ENCODE measurements at regions of chr2 and their contacts with region 1.

Region 1: GRCh38 chr2:54723131-54723995 is at the start of gene EML6:
- DNase-seq: peak; percentile 100
- H3K4me3 Mint-ChIP-seq: peak within 1 kb of the TSS; percentile 96
- H3K27ac Mint-ChIP-seq: peak within 1 kb of the TSS; percentile 82
- H3K4me1 Mint-ChIP-seq: peaks cover 13% of the 10 kb centered on the region
- H3K27me3 Mint-ChIP-seq: peaks cover 73% of the 10 kb centered on the region
- total RNA-seq, gene EML6: 0.77 and 0.83 TPM in 2 replicates

Region 2: GRCh38 chr2:53767405-53768241 is 955.7 kb before region 1 on chr2 and contains the start of gene CHAC2:
- intact Hi-C with region 1: loop called (anchors 1 kb)
- DNase-seq: peak; percentile 96
- H3K4me3 Mint-ChIP-seq: peak within 1 kb of the TSS; percentile 92
- H3K27ac Mint-ChIP-seq: peak within 1 kb of the TSS; percentile 98
- H3K4me1 Mint-ChIP-seq: peaks cover 24% of the 10 kb centered on the region
- H3K27me3 Mint-ChIP-seq: no peaks in the 10 kb centered on the region
- total RNA-seq, gene CHAC2: 24.8 and 27.4 TPM in 2 replicates

Region 3: GRCh38 chr2:54330162-54330925 is 393.0 kb before region 1 on chr2:
- intact Hi-C with region 1: loop called (anchors 1 kb)
- DNase-seq: peak; percentile 96
- H3K4me3 Mint-ChIP-seq: peak overlapping the region; percentile 85
- H3K27ac Mint-ChIP-seq: peak overlapping the region; percentile 78
- H3K4me1 Mint-ChIP-seq: peaks cover 18% of the 10 kb centered on the region
- H3K27me3 Mint-ChIP-seq: peaks cover 29% of the 10 kb centered on the region

Region 4: DNA sequence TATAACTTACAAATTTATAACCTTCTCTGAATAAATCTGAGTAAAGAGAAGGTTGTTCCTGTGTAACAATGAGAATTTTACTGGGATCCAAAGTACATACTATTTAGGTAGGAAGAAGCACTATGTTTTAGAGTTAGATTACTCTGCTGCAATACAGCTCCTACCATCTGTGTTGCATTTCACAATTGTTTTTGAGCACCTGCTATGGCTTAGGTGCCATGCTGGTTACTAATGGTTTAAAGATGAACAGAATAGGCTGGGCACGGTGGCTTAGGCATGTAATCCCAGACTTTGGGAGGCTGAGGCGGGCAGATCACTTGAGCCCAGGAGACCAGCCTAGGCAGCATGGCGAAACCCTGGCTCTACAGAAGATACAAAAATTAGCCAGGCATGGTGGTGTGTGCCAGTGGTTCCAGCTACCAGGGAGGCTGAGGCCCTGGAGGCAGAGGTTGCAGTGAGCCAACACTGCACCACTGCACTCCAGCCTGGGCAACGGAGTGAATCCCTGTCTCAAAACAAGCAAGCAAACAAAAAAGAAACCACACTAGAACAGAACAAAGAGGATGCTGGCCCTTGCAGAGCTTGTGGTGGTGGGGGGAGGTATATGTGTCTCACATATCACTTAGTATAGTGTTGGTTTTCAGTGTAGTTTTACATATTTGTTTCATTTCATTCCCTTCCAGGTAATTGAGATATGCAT is 210.6 kb before region 1 on chr2:
- intact Hi-C with region 1: no loop called
- DNase-seq: no peak
- H3K4me3 Mint-ChIP-seq: no peak overlapping the region
- H3K27ac Mint-ChIP-seq: no peak overlapping the region
- H3K4me1 Mint-ChIP-seq: peaks cover 4% of the 10 kb centered on the region
- H3K27me3 Mint-ChIP-seq: peaks cover 14% of the 10 kb centered on the region

Region 5: GRCh38 chr2:54570925-54571694 is 152.3 kb before region 1 on chr2:
- intact Hi-C with region 1: loop called (anchors 2 kb)
- DNase-seq: peak; percentile 95
- H3K4me3 Mint-ChIP-seq: peak overlapping the region; percentile 79
- H3K27ac Mint-ChIP-seq: peak overlapping the region; percentile 96
- H3K4me1 Mint-ChIP-seq: peaks cover 78% of the 10 kb centered on the region
- H3K27me3 Mint-ChIP-seq: no peaks in the 10 kb centered on the region

Region 6: DNA sequence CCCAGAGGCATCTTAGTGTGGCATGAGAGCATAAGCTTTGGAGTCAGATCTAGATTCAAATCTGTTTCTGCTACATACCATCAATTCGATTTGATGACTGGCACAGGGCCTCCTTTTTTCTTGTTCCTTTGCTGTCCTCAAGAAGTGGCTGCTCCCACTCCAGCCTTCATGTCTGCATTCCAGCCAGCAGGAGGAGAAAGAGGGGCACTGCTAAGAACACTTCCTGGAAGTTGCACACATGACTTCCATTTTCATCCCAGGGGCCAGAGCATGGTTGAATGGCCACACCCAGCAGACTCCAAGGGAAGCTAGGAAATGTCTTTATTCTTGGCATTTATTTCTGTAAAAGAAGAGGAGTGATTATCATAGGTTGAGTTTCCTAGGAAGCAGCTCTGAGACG is 50.5 kb after region 1 on chr2:
- intact Hi-C with region 1: no loop called
- DNase-seq: peak; percentile 30
- H3K4me3 Mint-ChIP-seq: no peak overlapping the region
- H3K27ac Mint-ChIP-seq: no peak overlapping the region
- H3K4me1 Mint-ChIP-seq: peaks cover 2% of the 10 kb centered on the region
- H3K27me3 Mint-ChIP-seq: no peaks in the 10 kb centered on the region

Region 7: GRCh38 chr2:54838585-54839035 is 115.2 kb after region 1 on chr2:
- intact Hi-C with region 1: loop called (anchors 2 kb)
- DNase-seq: peak; percentile 86
- H3K4me3 Mint-ChIP-seq: no peak overlapping the region
- H3K27ac Mint-ChIP-seq: no peak overlapping the region
- H3K4me1 Mint-ChIP-seq: no peaks in the 10 kb centered on the region
- H3K27me3 Mint-ChIP-seq: no peaks in the 10 kb centered on the region

Region 8: GRCh38 chr2:55232084-55232862 is 508.9 kb after region 1 on chr2 and contains the starts of genes CLHC1 and RPS27A:
- intact Hi-C with region 1: loop called (anchors 1 kb)
- DNase-seq: peak; percentile 98
- H3K4me3 Mint-ChIP-seq: peak within 1 kb of the TSS; percentile 91
- H3K27ac Mint-ChIP-seq: peak within 1 kb of the TSS; percentile 95
- H3K4me1 Mint-ChIP-seq: peaks cover 50% of the 10 kb centered on the region
- H3K27me3 Mint-ChIP-seq: no peaks in the 10 kb centered on the region
- total RNA-seq, gene CLHC1: 7.3 and 10.1 TPM in 2 replicates
- total RNA-seq, gene RPS27A: 1,064 and 1,070 TPM in 2 replicates

Region 9: DNA sequence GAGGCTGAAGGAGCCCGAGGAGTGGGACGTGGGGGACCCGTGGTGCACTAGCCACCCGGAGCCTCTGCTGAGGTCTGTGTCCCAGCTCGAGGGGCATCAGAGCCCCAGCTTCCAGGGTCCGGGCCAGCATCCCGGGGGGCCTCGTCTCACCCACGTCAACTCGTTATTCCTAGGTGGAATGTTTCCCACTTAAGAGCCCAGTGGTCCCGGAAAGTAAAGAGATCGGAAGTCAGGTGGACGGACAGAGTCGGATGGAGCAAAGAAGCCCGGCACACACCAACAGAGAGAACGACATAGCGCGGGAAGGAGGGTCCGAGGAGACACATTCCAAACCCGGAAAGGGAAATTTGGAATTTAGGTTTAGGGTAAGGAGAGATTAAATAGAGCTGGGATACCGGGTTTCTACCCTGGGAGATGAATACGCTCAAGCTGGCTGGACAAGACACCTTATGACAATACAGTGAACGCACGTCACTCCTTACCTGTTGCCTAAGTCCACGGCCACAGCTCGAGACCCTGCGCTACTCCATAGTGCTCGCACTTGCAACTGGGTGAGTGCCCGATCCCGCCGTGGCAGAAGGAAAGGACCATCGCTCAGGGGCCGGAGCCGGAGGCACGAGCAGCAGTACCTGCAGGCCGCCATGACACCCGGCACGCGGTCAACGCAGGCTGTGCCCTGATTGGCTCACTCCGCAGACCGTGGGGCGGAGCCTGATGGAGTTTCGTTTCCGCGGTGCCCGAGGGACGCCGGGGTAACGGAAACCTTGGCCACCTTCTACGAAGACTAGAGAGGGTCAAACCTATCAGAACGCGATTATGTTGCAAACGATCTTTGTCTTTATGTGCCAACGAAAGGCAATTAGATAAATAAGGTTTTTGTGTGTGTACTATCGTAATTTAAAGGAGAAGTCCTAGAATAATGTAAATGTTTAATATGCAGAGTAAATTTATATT is 970.1 kb after region 1 on chr2 and contains the start of gene PNPT1:
- intact Hi-C with region 1: loop called (anchors 5 kb)
- DNase-seq: peak; percentile 99
- H3K4me3 Mint-ChIP-seq: peak within 1 kb of the TSS; percentile 98
- H3K27ac Mint-ChIP-seq: peak within 1 kb of the TSS; percentile 96
- H3K4me1 Mint-ChIP-seq: peaks cover 29% of the 10 kb centered on the region
- H3K27me3 Mint-ChIP-seq: peaks cover 6% of the 10 kb centered on the region
- total RNA-seq, gene PNPT1: 68.1 and 77.9 TPM in 2 replicates